Endothelial cell of umbilical vein (primary cell): ENCODE measurements at regions of chr5 and their contacts with region 1.

Region 1: DNA sequence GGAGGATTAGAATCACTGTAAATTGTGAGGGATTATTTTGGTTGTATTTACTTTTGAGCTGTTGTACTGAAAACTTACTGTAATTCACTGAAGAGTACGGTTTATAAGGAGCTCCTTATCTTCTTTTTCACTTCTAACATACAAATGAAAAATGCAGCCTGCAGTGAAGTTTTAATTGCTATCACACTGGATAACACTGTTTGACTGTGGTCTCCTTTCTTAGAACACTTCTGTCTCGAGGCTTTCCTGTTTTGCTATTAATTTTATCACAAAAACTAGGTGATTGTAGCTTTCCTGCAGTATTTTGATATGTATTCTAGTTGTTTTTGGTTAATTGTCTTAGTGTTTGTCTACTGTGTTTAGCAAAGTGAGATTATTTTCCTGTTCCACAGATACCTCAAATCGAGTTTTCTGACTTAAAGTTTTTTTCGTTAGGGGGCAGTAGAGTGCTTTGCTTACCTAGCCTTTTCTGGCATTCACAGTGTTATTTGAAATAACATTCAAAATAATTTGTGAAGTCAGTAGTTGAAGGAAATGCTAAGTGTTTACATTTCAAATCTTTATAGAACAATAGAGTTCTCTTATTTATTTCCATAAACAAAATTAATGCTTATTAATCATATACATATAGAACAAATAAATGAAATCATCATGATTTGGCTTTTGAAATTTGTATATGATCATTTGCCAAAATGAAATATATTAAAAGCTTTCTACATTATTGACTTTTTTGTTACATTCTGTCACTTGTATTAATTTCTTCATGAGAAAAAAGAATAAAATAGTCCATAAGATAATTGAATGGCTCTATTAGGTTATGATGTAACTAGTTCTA is 52.9 kb downstream of the COMMD10 start:
- DNase-seq: peak; percentile 71
- H3K4me3 ChIP-seq: no peak overlapping the region
- H3K27ac ChIP-seq: no peak overlapping the region
- H3K4me1 ChIP-seq: peaks cover 2% of the 10 kb centered on the region
- H3K27me3 ChIP-seq: no peaks in the 10 kb centered on the region
- CTCF ChIP-seq: peak; percentile 52 to 60
- POLR2A ChIP-seq: no peak

Region 2: DNA sequence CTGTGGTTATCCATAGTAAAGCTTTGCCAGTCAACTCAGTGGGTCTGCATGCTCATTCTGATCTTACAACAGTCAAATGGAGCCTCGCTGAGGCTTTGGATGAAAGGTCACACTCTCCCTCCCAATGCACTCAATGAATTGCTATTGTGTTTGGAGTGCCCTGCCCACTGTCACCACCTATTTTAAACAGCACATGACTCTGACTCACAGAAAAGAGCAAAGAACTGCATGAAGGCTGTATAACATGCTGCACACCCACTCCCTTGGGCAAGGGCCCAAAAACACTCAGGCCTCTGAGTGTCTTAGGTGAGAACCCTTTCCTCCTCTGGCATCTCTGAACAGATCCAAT is 722.6 kb before region 1 on chr5:
- CTCF ChIA-PET with region 1: no interaction called
- POLR2A ChIA-PET with region 1: no interaction called
- dilution Hi-C with region 1: no loop called
- intact Hi-C with region 1: no loop called
- DNase-seq: peak; percentile 57
- H3K4me3 ChIP-seq: no peak overlapping the region
- H3K27ac ChIP-seq: no peak overlapping the region
- H3K4me1 ChIP-seq: peaks cover 17% of the 10 kb centered on the region
- H3K27me3 ChIP-seq: no peaks in the 10 kb centered on the region
- CTCF ChIP-seq: no peak
- POLR2A ChIP-seq: no peak

Region 3: DNA sequence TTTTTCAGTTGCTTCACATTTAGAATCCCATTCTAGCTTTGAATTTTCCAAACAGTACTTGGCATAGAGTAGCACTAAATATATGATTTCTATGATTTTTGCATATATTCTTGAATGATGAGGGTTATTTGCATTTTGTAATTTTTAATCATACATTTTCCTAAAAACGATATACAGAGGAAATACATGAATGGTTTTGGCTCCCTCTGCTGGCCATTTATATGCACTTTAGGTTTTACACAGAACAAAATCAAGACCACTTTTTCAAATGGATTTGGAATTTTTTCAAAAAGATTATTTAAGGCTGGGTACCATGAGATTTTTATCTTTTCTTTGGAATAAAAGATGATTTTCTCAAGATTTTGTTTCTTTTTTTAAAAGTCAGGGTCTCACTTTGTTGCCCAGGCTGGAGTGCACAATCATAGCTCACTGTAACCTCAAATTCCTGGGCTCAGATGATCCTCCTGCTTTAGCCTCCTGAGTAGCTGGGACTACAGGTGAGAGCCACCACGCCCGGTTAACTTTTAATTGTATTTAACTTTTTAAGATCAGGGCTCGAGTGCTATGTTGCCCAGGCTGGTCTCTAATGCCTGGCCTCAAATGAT is 69.6 kb before region 1 on chr5:
- CTCF ChIA-PET with region 1: no interaction called
- POLR2A ChIA-PET with region 1: no interaction called
- dilution Hi-C with region 1: no loop called
- intact Hi-C with region 1: no loop called
- DNase-seq: peak; percentile 61
- H3K4me3 ChIP-seq: no peak overlapping the region
- H3K27ac ChIP-seq: no peak overlapping the region
- H3K4me1 ChIP-seq: no peaks in the 10 kb centered on the region
- H3K27me3 ChIP-seq: peaks cover 0 to 7% of the 10 kb centered on the region in 2 experiments
- CTCF ChIP-seq: peak; percentile 43 to 51
- POLR2A ChIP-seq: no peak

Region 4: GRCh38 chr5:116174111-116174510 is 36.4 kb after region 1 on chr5:
- CTCF ChIA-PET with region 1: no interaction called
- POLR2A ChIA-PET with region 1: no interaction called
- dilution Hi-C with region 1: no loop called
- intact Hi-C with region 1: no loop called
- DNase-seq: no peak
- H3K4me3 ChIP-seq: no peak overlapping the region
- H3K27ac ChIP-seq: no peak overlapping the region
- H3K4me1 ChIP-seq: no peaks in the 10 kb centered on the region
- H3K27me3 ChIP-seq: no peaks in the 10 kb centered on the region
- CTCF ChIP-seq: no peak
- POLR2A ChIP-seq: no peak

Region 5: DNA sequence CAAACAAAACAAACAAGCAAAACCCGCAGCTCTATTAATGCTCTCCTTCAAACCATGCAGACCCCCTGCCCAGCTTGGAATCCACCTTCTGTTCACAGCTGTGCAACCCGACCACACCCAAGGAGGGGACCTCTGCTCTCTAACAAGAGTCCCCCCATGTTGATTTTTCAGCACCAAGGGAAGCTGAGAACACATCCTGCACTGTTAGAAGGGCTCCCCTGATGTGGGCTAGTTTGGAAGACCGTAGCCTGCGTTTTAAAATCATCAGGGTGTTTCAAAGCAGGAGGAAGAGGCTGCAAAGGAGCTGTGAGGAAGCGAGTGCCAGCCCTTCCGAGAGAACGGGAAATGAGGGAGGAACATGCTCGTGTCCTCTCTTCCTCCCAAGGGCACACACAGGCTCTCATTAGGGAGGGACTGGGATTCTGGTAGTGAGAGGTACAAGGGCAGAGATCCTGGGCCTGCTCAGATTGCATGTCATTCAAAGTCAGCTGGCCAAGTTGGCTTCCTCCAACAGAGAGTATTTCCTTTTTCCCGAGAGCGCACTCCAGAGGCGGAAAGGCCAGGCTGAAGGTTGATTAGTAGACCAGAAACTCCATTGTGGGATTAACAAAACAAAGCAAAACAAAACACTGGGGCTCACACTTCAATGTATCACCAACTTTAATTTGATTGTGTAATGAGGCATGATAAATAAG is 250.9 kb after region 1 on chr5:
- CTCF ChIA-PET with region 1: no interaction called
- POLR2A ChIA-PET with region 1: no interaction called
- dilution Hi-C with region 1: no loop called
- intact Hi-C with region 1: loop called (anchors 5 kb)
- DNase-seq: peak; percentile 81
- H3K4me3 ChIP-seq: no peak overlapping the region
- H3K27ac ChIP-seq: no peak overlapping the region
- H3K4me1 ChIP-seq: peaks cover 17% of the 10 kb centered on the region
- H3K27me3 ChIP-seq: no peaks in the 10 kb centered on the region
- CTCF ChIP-seq: peak in 1 of 2 donors; percentile 9
- POLR2A ChIP-seq: no peak

Region 6: GRCh38 chr5:116557669-116558271 is 420.0 kb after region 1 on chr5:
- CTCF ChIA-PET with region 1: interaction called, 3 read pairs
- POLR2A ChIA-PET with region 1: no interaction called
- dilution Hi-C with region 1: no loop called
- intact Hi-C with region 1: loop called (anchors 5 kb)
- DNase-seq: peak; percentile 29
- H3K4me3 ChIP-seq: no peak overlapping the region
- H3K27ac ChIP-seq: no peak overlapping the region
- H3K4me1 ChIP-seq: no peaks in the 10 kb centered on the region
- H3K27me3 ChIP-seq: no peaks in the 10 kb centered on the region
- CTCF ChIP-seq: peak; percentile 37 to 47
- POLR2A ChIP-seq: no peak

Region 7: GRCh38 chr5:116574367-116575325 is 436.9 kb after region 1 on chr5 and contains the start of gene SEMA6A:
- CTCF ChIA-PET with region 1: interaction called, 8 read pairs
- POLR2A ChIA-PET with region 1: no interaction called
- dilution Hi-C with region 1: no loop called
- intact Hi-C with region 1: loop called (anchors 1 kb)
- DNase-seq: peak; percentile 91
- H3K4me3 ChIP-seq: peak within 1 kb of the TSS; percentile 53 to 61 (median 58)
- H3K27ac ChIP-seq: no peak within 1 kb of the TSS
- H3K4me1 ChIP-seq: peaks cover 17% of the 10 kb centered on the region
- H3K27me3 ChIP-seq: peaks cover 44 to 70% of the 10 kb centered on the region in 2 experiments
- CTCF ChIP-seq: no peak
- POLR2A ChIP-seq: no peak
- total RNA-seq, gene SEMA6A: 1.4 and 1.5 TPM in 2 replicates